Mammary epithelial cell (primary cell): ENCODE measurements at regions of chr10 and their contacts with region 1.

Region 1: DNA sequence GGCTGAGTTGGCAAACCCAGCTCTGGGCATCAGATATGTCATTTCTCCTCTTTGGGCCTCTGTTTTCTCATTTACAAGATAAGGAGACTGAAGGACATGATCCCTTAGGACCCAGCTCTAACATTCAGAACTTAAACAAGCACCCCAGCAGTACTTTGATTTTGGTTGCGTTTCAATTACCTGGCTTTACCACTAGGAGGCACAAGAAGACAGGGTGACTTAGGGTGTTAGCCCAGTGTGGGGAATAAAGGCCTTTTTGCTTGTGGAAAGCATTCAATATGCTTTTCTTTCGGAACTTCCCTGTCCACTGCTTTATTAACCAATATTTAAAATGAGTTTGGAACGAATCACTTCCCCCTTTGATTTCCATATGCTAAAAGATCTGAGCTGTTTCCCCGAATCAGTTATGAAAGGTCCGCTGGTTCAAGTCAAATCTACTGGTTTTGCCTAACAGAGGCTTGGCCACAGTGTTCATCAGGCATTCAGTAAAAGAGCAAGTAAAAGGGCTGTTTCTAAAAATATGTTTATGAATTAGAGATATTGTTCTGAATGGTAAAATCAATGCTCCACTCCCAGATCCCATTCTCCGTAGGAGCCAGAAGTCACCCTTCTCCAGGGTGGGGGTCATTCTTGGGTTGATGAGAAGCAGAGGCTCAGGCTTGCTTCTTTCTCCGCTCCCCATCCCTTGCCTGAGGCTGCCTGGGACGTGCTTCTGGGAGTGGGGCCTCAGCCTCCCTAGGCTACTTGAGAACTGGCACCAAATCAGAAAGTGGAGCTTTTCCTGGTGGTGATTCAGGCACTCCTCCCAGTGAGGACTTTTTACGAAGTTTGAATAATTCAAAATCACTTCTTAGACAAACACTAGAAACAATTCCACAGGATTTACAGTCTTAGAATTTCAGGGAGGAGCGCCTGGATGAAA is 105.5 kb downstream of the MYOF start:
- DNase-seq: peak; percentile 81
- H3K4me3 ChIP-seq: no peak overlapping the region
- H3K27ac ChIP-seq: peak overlapping the region; percentile 95
- H3K4me1 ChIP-seq: peaks cover 46% of the 10 kb centered on the region
- H3K27me3 ChIP-seq: no peaks in the 10 kb centered on the region
- CTCF ChIP-seq: peak; percentile 93 to 95

Region 2: DNA sequence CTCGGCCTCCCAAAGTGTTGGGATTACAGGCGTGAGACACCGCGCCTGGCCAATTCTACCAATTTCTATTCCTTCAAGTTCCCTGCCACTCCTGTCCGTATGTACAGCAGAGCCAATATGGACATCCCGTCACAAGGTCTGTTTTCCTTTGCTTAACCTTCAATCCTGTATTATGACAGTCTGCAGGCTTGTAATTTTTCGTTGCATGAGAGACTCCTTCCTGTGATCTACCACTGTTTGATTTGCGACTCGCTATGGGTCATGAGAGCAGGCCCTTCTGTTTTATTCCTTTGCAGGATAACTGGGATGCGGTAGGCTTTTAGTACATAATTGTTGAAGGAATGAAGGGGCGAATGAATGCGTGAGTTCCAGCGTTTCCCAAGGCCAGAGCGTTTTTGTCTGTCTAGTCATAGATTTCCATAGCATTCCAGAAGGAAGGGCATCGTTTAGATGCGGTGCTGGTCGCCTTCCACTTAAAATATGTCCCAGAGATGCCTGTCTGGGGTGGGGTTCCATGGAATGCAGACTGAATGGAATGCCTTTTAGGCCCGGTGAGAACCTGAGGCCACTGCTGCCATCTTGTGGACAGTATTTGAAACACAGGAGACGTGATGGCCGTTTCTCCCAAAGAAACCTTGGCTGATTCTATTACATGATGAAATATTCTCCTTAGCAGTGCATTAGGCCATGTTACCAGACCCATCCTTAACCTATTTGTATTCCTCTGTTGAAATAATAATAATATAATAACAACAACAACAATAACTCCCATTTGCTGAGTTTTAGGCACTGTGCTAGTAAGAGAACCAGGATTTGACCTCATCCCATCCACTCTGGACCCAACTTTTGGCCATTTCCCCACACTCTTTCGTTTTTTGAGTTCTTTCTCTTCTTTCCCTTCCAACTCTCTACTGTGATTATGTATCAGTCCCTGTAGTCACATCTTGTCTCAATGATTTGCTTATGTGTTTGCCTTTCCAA is 87.7 kb before region 1 on chr10:
- CTCF ChIA-PET with region 1: no interaction called
- dilution Hi-C with region 1: no loop called
- in situ Hi-C with region 1: no loop called
- intact Hi-C with region 1: no loop called
- DNase-seq: peak; percentile 70
- H3K4me3 ChIP-seq: no peak overlapping the region
- H3K27ac ChIP-seq: no peak overlapping the region
- H3K4me1 ChIP-seq: peaks cover 13% of the 10 kb centered on the region
- H3K27me3 ChIP-seq: no peaks in the 10 kb centered on the region
- CTCF ChIP-seq: peak; percentile 69 to 80

Region 3: DNA sequence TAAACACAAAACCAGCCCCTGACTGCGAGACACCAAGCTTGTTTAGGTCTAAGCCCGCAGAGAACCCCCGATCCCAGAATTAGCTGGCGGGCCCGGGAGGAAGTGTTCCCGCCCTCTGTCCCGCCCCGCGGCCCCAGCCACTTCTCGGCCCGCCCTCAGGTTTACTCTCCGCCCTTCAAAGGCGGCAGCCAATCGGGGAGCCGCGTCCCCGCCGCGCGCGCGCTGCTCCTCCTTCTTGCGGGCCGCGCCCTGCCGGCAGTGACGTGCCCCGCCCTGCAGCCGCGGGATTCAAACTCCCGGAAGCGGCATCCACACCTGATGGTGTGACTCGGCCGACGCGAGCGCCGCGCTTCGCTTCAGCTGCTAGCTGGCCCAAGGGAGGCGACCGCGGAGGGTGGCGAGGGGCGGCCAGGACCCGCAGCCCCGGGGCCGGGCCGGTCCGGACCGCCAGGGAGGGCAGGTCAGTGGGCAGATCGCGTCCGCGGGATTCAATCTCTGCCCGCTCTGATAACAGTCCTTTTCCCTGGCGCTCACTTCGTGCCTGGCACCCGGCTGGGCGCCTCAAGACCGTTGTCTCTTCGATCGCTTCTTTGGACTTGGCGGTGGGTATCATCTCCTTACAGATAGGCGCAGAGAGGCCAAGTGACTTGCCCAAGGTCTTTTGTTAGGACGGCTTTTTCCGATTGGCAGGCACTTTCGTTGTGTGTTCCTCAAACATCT is 119.8 kb after region 1 on chr10 and contains the start of gene CEP55:
- CTCF ChIA-PET with region 1: no interaction called
- dilution Hi-C with region 1: no loop called
- in situ Hi-C with region 1: no loop called
- intact Hi-C with region 1: loop called (anchors 5 kb)
- DNase-seq: peak; percentile 95
- H3K4me3 ChIP-seq: peak within 1 kb of the TSS; percentile 75 to 83 (median 83)
- H3K27ac ChIP-seq: peak within 1 kb of the TSS; percentile 75
- H3K4me1 ChIP-seq: peaks cover 12% of the 10 kb centered on the region
- H3K27me3 ChIP-seq: no peaks in the 10 kb centered on the region
- CTCF ChIP-seq: no peak
- total RNA-seq, gene CEP55: 1.2 to 35.4 TPM

Region 4: GRCh38 chr10:93515071-93516005 is 138.7 kb after region 1 on chr10:
- CTCF ChIA-PET with region 1: no interaction called
- dilution Hi-C with region 1: no loop called
- in situ Hi-C with region 1: no loop called
- intact Hi-C with region 1: loop called (anchors 1 kb)
- DNase-seq: no peak
- H3K4me3 ChIP-seq: no peak overlapping the region
- H3K27ac ChIP-seq: no peak overlapping the region
- H3K4me1 ChIP-seq: no peaks in the 10 kb centered on the region
- H3K27me3 ChIP-seq: no peaks in the 10 kb centered on the region
- CTCF ChIP-seq: no peak